Activated T-helper 1 cell treated with anti-CD3 and anti-CD28 coated beads, Interleukin-12 subunit alpha, Interleukin-12 subunit beta, Interleukin-2, Interleukin-4 antibody, amounts not matched to agents 30 ng/mL and 10 ng/mL and 1 ng/mL, durations not matched to agents 14 hours and 24 hours and 36 hours (primary cell): ENCODE measurements at regions of chr2 and their contacts with region 1.

Region 1: GRCh38 chr2:26785431-26786206 is at the start of gene CENPA:
- DNase-seq: peak; percentile 94
- H3K4me3 Mint-ChIP-seq: peak within 1 kb of the TSS; percentile 96
- H3K27ac Mint-ChIP-seq: peak within 1 kb of the TSS; percentile 89
- H3K4me1 Mint-ChIP-seq: peaks cover 33% of the 10 kb centered on the region
- H3K27me3 Mint-ChIP-seq: no peaks in the 10 kb centered on the region
- total RNA-seq, gene CENPA: 16.6 and 19.7 TPM in 2 replicates

Region 2: GRCh38 chr2:26764078-26764887 is 21.3 kb before region 1 on chr2 and contains the start of gene SLC35F6:
- intact Hi-C with region 1: loop called (anchors 1 kb)
- DNase-seq: peak; percentile 81
- H3K4me3 Mint-ChIP-seq: peak within 1 kb of the TSS; percentile 87
- H3K27ac Mint-ChIP-seq: peak within 1 kb of the TSS; percentile 85
- H3K4me1 Mint-ChIP-seq: peaks cover 34% of the 10 kb centered on the region
- H3K27me3 Mint-ChIP-seq: peaks cover 2% of the 10 kb centered on the region
- total RNA-seq, gene SLC35F6: 14.3 and 14.5 TPM in 2 replicates

Region 3: DNA sequence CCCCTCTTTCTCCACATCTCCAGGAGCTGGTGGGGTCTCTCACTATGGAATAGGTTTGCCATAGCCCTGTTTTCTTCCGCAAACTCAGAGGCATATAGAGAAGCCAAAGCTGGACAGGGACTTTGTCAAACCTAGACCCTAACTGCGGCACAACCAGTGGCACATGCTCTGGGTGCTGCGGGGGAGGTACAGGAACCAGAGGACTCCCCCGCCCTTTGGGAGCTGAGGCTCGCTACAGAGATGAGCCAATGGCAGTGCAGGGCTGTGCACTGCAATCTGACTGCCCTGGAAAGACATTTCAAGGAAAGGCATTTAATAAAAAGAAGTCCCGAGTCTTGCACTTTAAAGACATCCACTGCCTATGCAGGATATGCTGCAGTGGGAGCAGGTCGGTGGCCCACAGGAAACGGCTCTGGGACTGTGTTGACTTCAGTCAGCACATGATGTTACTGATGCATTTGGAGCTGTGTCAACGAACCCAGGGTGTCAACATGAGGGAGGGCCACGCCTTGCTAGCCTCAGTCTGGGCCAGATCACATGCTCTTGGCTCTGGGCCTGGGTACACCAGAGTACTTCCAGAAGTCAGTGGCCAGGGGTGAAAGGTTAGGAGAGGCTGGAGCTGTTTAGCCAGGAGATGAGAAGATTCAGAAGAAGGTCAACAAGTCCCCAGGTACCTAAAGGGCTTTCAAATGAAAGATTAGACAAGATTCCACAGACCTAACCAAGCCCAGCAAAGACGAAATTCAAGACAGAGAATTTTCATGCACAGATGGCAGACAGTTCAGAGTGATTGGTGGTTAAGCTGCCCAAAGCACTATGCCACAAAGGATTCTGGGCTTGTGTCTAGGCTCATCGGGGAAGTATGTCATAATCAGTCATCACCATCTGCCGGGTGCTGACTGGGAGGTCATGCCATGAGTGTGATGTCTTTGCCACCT is 13.3 kb before region 1 on chr2:
- intact Hi-C with region 1: loop called (anchors 2 kb)
- DNase-seq: peak; percentile 44
- H3K4me3 Mint-ChIP-seq: peak overlapping the region; percentile 52
- H3K27ac Mint-ChIP-seq: peak overlapping the region; percentile 94
- H3K4me1 Mint-ChIP-seq: peaks cover 35% of the 10 kb centered on the region
- H3K27me3 Mint-ChIP-seq: no peaks in the 10 kb centered on the region

Region 4: DNA sequence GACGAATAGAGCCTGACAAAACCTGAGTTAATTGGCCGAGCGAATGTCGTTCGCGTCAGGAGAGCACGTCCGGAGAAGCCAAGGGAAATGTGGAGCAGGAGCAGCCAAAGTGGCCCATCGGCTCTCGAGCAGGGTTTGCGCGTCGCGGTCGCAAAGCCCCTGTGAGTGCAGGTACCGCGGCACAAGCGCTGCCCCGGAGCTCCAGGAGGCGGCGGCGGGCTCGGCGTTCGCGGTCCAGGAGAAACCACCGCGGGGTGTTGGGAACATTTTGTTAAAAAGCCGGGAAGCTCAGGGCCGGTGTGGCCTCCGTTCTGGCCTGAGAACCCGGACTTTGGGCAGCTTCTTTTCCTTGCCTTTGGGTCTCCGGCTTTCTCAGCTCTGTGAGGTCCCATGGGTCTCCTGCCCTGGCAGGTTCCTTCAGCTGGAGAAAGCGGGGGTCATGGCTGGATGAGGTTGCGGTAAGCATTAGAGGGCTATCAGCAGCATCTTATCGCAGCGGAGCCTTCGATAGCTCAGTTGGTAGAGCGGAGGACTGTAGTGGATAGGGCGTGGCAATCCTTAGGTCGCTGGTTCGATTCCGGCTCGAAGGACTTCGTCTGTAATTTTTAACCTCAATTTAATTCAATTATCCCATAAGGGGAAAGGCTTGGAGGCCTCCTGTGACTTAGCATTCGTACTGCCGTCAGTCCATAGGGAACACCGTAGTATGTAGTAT is 264.8 kb after region 1 on chr2:
- intact Hi-C with region 1: loop called (anchors 1 kb)
- DNase-seq: peak; percentile 88
- H3K4me3 Mint-ChIP-seq: peak overlapping the region; percentile 96
- H3K27ac Mint-ChIP-seq: peak overlapping the region; percentile 99
- H3K4me1 Mint-ChIP-seq: peaks cover 36% of the 10 kb centered on the region
- H3K27me3 Mint-ChIP-seq: peaks cover 7% of the 10 kb centered on the region

Region 5: GRCh38 chr2:27071277-27071989 is 285.8 kb after region 1 on chr2 and contains the start of gene OST4:
- intact Hi-C with region 1: loop called (anchors 1 kb)
- DNase-seq: peak; percentile 91
- H3K4me3 Mint-ChIP-seq: peak within 1 kb of the TSS; percentile 99
- H3K27ac Mint-ChIP-seq: peak within 1 kb of the TSS; percentile 98
- H3K4me1 Mint-ChIP-seq: peaks cover 84% of the 10 kb centered on the region
- H3K27me3 Mint-ChIP-seq: peaks cover 2% of the 10 kb centered on the region
- total RNA-seq, gene OST4: 322 and 332 TPM in 2 replicates